Caco-2 (cell line): ENCODE measurements at regions of chr17 and their contacts with region 1.

Region 1: DNA sequence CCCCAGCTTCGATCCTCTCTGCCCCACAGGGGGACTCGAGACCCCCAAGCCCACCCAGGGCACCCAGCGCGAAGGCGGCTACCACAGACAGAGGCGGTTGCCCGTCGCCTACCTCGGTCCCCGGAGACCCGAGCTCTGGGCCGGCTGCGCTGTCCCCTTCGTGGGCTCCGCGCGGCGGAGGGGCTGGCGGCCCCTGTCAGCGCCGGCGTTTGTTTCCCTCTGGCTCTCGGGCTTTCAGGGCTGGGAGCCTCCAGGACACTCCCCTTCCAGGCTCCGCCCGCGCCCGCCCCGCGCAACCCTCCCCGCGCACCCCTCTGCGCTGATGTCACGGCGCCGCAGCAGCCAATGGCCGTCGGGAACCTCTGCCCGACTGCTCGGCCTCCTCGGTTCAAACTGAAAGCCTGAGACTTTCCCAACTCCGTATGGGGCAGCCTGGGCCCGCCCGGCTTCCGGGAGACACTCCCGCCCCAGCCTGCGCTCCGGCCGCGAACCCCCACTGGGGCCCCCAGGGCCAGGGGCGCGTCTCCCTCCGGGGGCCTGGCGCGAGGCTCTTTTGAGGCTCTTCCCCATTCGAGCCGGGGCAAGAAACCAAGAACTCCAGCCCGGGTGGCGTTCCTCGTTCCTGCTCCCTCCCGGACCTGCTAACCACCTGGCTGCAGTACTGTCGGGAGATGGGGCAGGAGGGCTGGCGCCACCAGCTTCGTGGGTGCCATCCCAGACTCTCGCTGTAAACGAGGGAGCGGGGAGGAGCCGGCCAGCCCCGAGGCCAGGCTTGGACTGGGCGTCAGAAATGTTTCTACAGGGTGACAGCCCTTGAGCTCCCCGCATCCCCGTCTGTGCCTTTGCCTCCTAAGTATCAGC is at the start of gene CDC42EP4:
- DNase-seq: peak; percentile 96 to 97
- H3K4me3 ChIP-seq: peak within 1 kb of the TSS; percentile 97
- H3K4me3 Mint-ChIP-seq: peak within 1 kb of the TSS; percentile 88
- H3K27ac Mint-ChIP-seq: peak within 1 kb of the TSS; percentile 90
- H3K4me1 ChIP-seq: peaks cover 29% of the 10 kb centered on the region
- H3K4me1 Mint-ChIP-seq: peaks cover 8% of the 10 kb centered on the region
- H3K27me3 ChIP-seq: no peaks in the 10 kb centered on the region
- H3K27me3 Mint-ChIP-seq: no peaks in the 10 kb centered on the region
- CTCF ChIP-seq: peak in 1 of 2 experiments; percentile 14
- total RNA-seq, gene CDC42EP4: 25.8 and 27.9 TPM in 2 replicates

Region 2: DNA sequence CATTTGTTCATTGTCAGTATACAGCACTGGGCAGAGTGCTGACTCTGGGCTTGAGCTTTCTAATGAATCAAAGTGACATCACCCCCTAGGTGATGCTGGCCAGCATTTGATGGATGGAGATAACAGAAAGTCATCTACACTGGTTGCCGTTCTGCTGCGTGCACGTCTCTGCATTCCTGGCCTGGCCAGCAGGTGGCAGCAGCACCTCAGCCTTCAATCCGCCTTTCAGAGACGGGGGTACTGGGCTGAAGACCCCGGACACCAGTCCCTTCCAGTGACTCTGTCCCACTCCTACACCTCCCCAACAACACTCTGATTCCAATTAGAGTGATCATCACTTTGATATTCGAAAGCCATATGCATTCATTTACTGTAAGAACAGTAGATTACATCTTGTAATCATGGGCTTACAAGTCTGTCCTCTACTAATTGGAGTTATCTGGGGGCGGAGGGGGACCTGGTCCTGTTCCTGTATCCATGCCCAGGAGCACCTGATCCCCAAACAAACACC is 56.3 kb before region 1 on chr17:
- CTCF ChIA-PET with region 1: interaction called, 5 read pairs
- POLR2A ChIA-PET with region 1: no interaction called
- intact Hi-C with region 1: loop called (anchors 2 kb)
- DNase-seq: peak in 1 of 2 experiments; percentile 67
- H3K4me3 ChIP-seq: no peak overlapping the region
- H3K4me3 Mint-ChIP-seq: no peak overlapping the region
- H3K27ac Mint-ChIP-seq: no peak overlapping the region
- H3K4me1 ChIP-seq: no peaks in the 10 kb centered on the region
- H3K4me1 Mint-ChIP-seq: no peaks in the 10 kb centered on the region
- H3K27me3 ChIP-seq: no peaks in the 10 kb centered on the region
- H3K27me3 Mint-ChIP-seq: no peaks in the 10 kb centered on the region
- CTCF ChIP-seq: peak; percentile 95 to 98

Region 3: GRCh38 chr17:73288515-73289302 is 23.3 kb before region 1 on chr17:
- CTCF ChIA-PET with region 1: interaction called, 6 read pairs
- POLR2A ChIA-PET with region 1: interaction called, 3 read pairs
- intact Hi-C with region 1: loop called (anchors 2 kb)
- DNase-seq: peak; percentile 51 to 63
- H3K4me3 ChIP-seq: no peak overlapping the region
- H3K4me3 Mint-ChIP-seq: peak overlapping the region; percentile 33
- H3K27ac Mint-ChIP-seq: peak overlapping the region; percentile 85
- H3K4me1 ChIP-seq: peaks cover 41% of the 10 kb centered on the region
- H3K4me1 Mint-ChIP-seq: peaks cover 57% of the 10 kb centered on the region
- H3K27me3 ChIP-seq: no peaks in the 10 kb centered on the region
- H3K27me3 Mint-ChIP-seq: no peaks in the 10 kb centered on the region
- CTCF ChIP-seq: no peak

Region 4: DNA sequence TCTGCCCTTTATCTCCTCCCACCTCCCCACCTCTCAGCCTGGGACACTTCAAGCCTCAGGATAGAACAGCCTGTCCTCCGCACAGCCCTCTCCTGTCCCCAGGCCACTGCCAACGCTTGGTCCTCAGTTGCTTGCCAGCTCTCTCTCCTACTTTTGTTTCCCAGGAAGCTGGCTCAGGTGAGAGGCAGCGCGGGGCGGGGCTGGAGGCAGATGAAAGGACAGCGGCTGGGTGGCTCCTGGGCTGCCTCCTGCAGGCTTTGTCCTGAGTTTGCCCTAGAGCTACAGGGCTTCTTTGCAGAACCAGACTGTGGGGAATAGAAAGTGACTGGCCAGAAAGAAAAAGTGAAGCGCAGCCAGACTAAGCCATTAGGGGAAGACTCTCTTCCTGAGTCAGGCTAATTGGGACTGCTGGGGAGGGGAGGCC is 48.0 kb after region 1 on chr17:
- CTCF ChIA-PET with region 1: interaction called, 14 read pairs
- POLR2A ChIA-PET with region 1: interaction called, 3 read pairs
- intact Hi-C with region 1: loop called (anchors 2 kb)
- DNase-seq: peak; percentile 76 to 81
- H3K4me3 ChIP-seq: no peak overlapping the region
- H3K4me3 Mint-ChIP-seq: no peak overlapping the region
- H3K27ac Mint-ChIP-seq: no peak overlapping the region
- H3K4me1 ChIP-seq: peaks cover 6% of the 10 kb centered on the region; the same call in 1 of the 2 replicates
- H3K4me1 Mint-ChIP-seq: peaks cover 11% of the 10 kb centered on the region
- H3K27me3 ChIP-seq: no peaks in the 10 kb centered on the region; the same call in 1 of the 2 replicates
- H3K27me3 Mint-ChIP-seq: no peaks in the 10 kb centered on the region
- CTCF ChIP-seq: peak in 1 of 2 experiments; percentile 56

Region 5: DNA sequence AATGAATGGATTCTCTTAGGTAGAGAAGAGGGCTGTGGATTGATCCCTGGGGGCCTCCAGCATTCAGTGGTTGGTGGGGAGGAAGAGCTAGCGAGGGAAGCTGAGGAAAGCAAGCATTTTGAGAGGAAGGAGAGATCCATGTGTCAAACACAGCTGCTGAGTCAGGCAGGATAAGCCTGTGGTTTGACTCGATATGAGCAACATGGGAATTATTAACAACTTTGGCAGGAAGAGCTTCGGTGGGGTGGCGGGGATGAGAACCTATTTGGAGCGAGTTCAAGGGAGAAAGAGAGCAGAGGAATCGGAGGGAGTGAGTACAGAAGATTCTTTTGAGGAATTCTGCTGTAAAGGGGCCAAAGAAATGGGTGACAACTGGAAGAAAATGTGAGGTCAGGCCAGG is 59.3 kb after region 1 on chr17:
- CTCF ChIA-PET with region 1: interaction called, 13 read pairs
- POLR2A ChIA-PET with region 1: no interaction called
- intact Hi-C with region 1: loop called (anchors 2 kb)
- DNase-seq: no peak
- H3K4me3 ChIP-seq: no peak overlapping the region
- H3K4me3 Mint-ChIP-seq: no peak overlapping the region
- H3K27ac Mint-ChIP-seq: no peak overlapping the region
- H3K4me1 ChIP-seq: no peaks in the 10 kb centered on the region
- H3K4me1 Mint-ChIP-seq: no peaks in the 10 kb centered on the region
- H3K27me3 ChIP-seq: no peaks in the 10 kb centered on the region; the same call in none of the 2 replicates
- H3K27me3 Mint-ChIP-seq: peaks cover 22% of the 10 kb centered on the region
- CTCF ChIP-seq: no peak